Posterior vena cava (tissue), 2 donors: ENCODE measurements at regions of chr15 and their contacts with region 1.

Region 1: DNA sequence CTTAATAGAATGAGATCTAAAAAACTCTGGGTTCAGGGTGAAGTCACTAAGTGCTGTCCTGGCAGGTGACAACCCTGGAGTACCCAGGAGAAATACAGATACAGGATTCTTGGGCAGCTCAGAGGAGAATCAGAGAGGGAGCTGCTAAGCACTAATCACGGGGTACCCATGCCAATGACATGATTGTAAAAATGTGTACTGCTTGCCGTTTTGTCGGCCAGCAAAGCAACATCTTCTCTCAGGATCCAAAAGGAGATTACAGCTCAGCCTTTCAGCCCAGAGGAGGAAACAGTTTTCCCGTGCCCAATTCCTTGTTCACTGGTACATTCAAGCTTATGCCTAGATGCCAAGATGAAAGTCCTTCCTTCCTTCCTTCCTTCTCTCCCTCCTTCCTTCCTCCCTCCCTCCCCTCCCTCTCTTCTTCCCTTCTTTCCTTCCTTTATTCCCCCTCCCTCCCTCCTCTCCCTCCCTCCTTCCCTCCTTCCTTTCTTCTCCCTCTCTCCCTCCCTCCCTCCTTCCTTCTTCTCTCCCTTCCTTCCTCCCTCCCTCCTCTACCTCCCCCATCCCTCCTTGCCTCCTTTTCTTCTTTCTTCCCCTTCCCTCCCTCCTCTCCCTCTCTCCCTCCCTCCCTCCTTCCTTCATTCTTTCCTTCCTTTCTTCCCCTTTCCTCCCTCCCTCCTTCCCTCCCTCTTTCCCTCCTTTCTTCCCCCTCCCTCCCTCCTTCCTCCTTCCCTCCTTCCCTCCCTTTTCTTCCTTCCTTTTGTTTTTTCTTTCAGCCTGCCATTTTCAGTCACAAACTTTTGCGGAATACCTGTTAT is 4.1 kb upstream of the MINAR1 start:
- DNase-seq: no peak

Region 2: DNA sequence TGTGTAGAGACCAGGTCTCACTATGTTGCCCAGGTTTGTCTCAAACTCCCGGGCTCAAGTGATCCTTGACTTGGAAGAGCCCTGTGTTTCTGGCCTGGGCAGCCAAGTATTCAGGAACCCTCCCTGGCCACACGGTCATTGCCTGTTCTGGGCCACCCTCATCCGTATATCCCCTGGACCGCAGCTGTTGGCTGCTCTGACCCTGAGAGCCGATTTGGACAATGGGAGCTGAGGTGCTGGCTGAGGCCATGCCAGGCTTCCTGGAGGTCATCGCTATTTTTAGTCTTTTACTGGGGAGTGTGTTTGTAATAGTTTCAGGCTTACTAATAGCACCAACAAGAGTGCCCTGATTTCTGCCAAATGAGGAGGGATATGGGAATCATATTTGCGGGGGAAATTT is 677.4 kb before region 1 on chr15:
- intact Hi-C with region 1: no loop called
- DNase-seq: peak; percentile 56

Region 3: DNA sequence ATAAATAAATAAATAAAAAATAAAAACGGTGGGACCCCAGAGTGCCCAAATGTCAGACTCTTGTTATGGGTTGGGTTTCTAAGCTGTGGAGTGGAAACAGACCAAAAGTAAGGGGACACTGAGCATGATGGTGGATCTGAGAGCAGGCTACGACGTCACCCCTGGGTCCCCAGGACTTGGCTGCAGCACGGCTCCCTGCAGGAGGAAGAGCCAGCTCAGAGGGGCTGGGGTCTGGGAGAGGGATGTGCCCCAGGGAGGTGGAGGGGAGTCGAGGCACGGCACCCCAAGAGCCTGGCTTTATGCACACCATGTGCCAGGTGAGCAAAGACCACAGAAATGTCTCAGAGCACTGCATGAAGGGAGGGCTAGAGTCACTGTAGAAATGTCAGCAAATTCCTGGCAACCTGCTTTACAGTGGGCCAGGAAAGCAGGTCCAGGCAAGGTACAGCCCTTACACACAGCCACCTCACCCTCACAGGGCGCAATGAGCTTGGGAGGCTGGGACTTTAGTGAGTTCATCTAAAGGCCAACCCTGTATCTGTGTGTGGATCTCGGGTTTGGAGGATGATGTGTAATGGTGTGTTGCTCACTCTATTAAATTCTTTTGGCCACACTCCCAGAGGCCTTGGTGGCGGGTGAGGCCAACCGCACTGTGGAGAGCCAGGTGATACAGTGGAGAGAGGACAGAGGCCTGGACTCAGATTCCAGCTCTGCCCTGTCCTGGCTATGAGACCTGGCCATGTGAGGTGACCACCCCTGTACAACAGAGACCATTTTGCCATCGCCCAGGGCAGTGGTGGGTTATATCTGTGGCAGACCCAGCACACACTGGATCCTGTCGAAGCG is 497.2 kb before region 1 on chr15:
- intact Hi-C with region 1: loop called in 1 of 2 experiments (anchors 5 kb)
- DNase-seq: no peak

Region 4: DNA sequence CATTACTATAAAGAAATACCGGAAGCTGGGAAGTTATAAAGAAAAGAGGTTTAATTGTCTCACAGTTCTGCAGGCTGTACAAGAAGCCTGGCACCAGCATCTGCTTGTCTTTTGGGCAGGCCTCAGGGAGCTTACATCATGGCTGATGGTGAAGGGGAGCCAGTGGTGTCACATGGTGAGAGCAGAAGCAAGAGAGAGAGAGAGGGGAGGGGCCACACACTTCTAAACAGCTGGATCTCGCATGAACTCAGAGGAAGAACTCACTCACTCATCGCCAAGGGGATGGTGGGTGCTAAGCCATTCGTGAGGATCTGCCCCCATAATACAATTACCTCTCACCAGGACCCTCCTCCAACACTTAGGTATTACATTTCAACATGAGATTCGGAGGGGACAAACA is 197.2 kb before region 1 on chr15:
- intact Hi-C with region 1: no loop called
- DNase-seq: no peak

Region 5: DNA sequence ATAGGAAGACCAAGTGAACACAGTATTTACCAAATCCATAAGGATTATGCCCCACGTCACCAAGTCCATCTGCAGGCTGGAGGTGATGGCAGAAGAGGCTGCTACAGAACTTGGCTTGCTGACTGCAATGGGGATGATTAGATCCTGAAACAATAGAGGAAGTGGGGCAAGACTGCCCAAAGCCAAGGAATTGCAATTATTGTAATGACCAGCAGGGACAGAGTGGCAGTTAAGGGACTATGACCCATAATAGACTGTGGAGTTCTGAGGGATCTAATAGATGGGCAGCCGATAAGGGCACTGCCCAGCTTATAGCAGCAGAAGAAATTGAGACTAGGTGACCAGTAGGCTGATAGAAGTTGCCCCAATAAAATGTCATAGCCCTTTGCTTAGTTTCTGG is 112.6 kb after region 1 on chr15:
- intact Hi-C with region 1: no loop called
- DNase-seq: no peak

Region 6: GRCh38 chr15:81176291-81176893 is 1748.4 kb after region 1 on chr15:
- intact Hi-C with region 1: loop called in 1 of 2 experiments (anchors 5 kb)
- DNase-seq: peak; percentile 88